ENCODE measurements at regions of chr10 and their contacts with region 1.

Region 1: DNA sequence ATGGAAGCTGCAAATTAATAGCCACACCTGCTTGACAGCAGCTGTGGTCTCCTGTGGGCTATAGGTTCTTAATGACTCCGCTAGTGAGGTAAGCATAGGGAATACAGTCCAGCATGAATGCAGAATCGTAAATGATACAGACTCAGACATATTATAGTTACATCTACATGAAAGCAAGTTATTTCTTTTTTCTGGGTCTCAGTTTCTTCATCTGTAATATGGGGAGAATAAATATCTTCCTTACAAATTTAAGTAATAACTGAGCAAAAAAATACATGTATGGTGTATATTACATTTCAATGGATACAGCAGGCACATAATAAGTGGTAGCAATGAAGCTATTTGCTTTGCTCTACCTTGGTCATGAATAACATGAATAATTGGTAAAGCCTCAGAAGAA is 245.9 kb upstream of the RHOBTB1 start:
- DNase-seq: no peak
- ATAC-seq: no peak
- H3K4me3 ChIP-seq: no peak overlapping the region
- H3K27ac ChIP-seq: no peak overlapping the region
- H3K4me1 ChIP-seq: no peaks in the 10 kb centered on the region
- H3K27me3 ChIP-seq: peaks cover 0 to 4% of the 10 kb centered on the region in 2 experiments; a peak in 1 of 5 replicates
- CTCF ChIP-seq: no peak
- EP300 ChIP-seq: no peak
- POLR2A ChIP-seq: no peak
- RAD21 ChIP-seq: no peak

Region 2: GRCh38 chr10:60816628-60817397 is 373.1 kb before region 1 on chr10:
- CTCF ChIA-PET with region 1: interaction called, 10 read pairs
- POLR2A ChIA-PET with region 1: no interaction called
- in situ Hi-C with region 1: no loop called
- intact Hi-C with region 1: loop called (anchors 1 kb)
- DNase-seq: peak; percentile 87 to 89 (median 88)
- ATAC-seq: peak; percentile 95
- H3K4me3 ChIP-seq: no peak overlapping the region
- H3K27ac ChIP-seq: no peak overlapping the region
- H3K4me1 ChIP-seq: no peaks in the 10 kb centered on the region
- H3K27me3 ChIP-seq: no peaks in the 10 kb centered on the region
- CTCF ChIP-seq: peak; percentile 80 to 93 (median 82)
- EP300 ChIP-seq: no peak
- POLR2A ChIP-seq: no peak
- RAD21 ChIP-seq: peak; percentile 95 to 98

Region 3: GRCh38 chr10:61140765-61141392 is 49.0 kb before region 1 on chr10:
- CTCF ChIA-PET with region 1: no interaction called
- POLR2A ChIA-PET with region 1: no interaction called
- in situ Hi-C with region 1: no loop called
- intact Hi-C with region 1: loop called (anchors 5 kb)
- DNase-seq: peak; percentile 27 to 62 (median 38)
- ATAC-seq: peak; percentile 83
- H3K4me3 ChIP-seq: no peak overlapping the region
- H3K27ac ChIP-seq: no peak overlapping the region
- H3K4me1 ChIP-seq: no peaks in the 10 kb centered on the region
- H3K27me3 ChIP-seq: no peaks in the 10 kb centered on the region
- CTCF ChIP-seq: peak; percentile 52 to 79 (median 67); a peak in 5 of 6 replicates
- EP300 ChIP-seq: no peak
- POLR2A ChIP-seq: no peak
- RAD21 ChIP-seq: peak; percentile 70 to 79